ENCODE measurements at regions of chr7 and their contacts with region 1.

Region 1: DNA sequence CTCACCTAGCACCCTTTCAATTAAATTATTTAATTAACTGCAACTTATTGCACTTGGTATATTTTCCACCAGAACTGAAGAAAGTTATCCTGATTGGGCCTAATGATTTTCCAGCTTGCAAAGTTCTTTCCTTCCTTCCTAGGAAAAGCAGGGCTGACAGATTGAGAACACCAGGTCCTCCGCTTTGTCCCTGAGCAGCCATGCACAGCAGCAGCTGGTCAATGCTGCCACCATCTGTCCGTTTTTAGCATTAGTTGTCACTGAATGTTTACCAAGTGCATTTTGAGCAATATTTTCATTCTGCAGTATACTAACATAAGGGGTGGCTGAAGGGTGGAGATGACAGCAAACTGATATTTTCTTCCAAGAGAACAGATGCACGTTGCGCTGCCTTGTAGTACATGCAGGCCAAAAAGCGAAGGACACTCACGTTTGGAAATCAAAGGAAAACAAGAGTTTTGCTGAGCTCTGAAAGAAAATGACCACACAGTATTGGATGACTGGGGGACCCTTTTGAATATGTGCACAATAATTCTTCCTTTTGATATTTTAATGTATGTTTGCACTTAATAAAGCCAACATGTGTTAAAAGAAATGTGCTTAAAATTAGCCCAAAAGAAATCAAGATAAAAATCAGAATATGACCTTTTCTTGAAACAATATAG is 248.8 kb upstream of the PTN start:
- DNase-seq: peak; percentile 84
- ATAC-seq: peak; percentile 88
- H3K4me3 ChIP-seq: no peak overlapping the region
- H3K27ac ChIP-seq: peak overlapping the region; percentile 91
- H3K4me1 ChIP-seq: peaks cover 17% of the 10 kb centered on the region
- H3K27me3 ChIP-seq: no peaks in the 10 kb centered on the region
- CTCF ChIP-seq: peak; percentile 93
- POLR2A ChIP-seq: peak; percentile 66
- RAD21 ChIP-seq: peak; percentile 100

Region 2: DNA sequence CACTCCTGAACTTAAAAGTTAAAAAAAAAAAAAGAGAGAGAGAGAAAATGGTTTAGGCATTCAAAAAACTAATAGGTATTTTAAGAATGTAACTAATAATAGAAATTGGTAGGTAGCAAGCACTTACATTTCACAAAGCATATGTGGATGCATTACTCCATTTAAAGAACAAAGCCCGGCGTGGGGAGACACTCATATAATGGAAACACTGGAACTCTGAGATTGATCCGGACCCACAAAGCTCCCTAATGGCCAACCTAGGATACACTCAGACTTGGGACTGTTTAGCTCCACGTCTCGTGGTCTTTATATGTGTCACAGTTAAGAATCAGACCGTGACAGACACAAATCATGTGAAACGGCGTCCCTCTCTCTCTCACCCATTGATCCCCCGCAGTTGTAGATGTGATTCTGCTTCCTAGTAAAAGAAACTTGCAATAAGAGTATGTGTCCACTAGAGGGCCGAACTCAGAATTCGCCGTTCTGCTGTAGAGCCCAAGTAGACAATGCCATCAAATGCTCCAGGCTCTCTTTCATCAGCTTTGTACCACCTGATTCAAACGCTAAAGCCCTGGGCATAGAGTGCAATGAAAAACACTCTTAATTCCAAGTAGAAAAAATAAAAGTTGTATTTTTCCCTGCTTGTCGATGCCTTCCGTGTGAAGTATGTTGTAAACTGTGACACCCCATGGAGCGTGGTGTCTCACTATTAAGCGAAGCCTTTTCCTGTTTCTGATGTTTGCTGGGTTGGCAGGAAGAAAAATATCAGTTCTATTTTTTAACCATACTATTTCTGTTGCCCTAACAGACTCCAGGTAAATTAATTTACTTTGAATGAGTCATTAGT is 1186.2 kb before region 1 on chr7:
- CTCF ChIA-PET with region 1: interaction called, 3 read pairs
- POLR2A ChIA-PET with region 1: no interaction called
- dilution Hi-C with region 1: no loop called
- in situ Hi-C with region 1: loop called (anchors 25 kb)
- intact Hi-C with region 1: loop called (anchors 1 kb)
- DNase-seq: peak; percentile 53
- ATAC-seq: peak; percentile 94
- H3K4me3 ChIP-seq: no peak overlapping the region
- H3K27ac ChIP-seq: no peak overlapping the region
- H3K4me1 ChIP-seq: no peaks in the 10 kb centered on the region
- H3K27me3 ChIP-seq: no peaks in the 10 kb centered on the region; the same call in 1 of the 2 replicates
- CTCF ChIP-seq: peak; percentile 68
- POLR2A ChIP-seq: no peak
- RAD21 ChIP-seq: peak; percentile 62

Region 3: GRCh38 chr7:136807598-136807997 is 784.8 kb before region 1 on chr7:
- CTCF ChIA-PET with region 1: no interaction called
- POLR2A ChIA-PET with region 1: no interaction called
- dilution Hi-C with region 1: no loop called
- in situ Hi-C with region 1: no loop called
- intact Hi-C with region 1: no loop called
- DNase-seq: no peak
- ATAC-seq: no peak
- H3K4me3 ChIP-seq: no peak overlapping the region
- H3K27ac ChIP-seq: no peak overlapping the region
- H3K4me1 ChIP-seq: no peaks in the 10 kb centered on the region
- H3K27me3 ChIP-seq: 0 out of 2 replicates have a peak, but pooled peaks cover 2% of the 10 kb centered on the region
- CTCF ChIP-seq: no peak
- POLR2A ChIP-seq: no peak
- RAD21 ChIP-seq: no peak

Region 4: GRCh38 chr7:136925044-136925443 is 667.3 kb before region 1 on chr7:
- CTCF ChIA-PET with region 1: no interaction called
- POLR2A ChIA-PET with region 1: no interaction called
- dilution Hi-C with region 1: no loop called
- in situ Hi-C with region 1: no loop called
- intact Hi-C with region 1: loop called (anchors 5 kb)
- DNase-seq: peak; percentile 74
- ATAC-seq: peak; percentile 40
- H3K4me3 ChIP-seq: no peak overlapping the region
- H3K27ac ChIP-seq: no peak overlapping the region
- H3K4me1 ChIP-seq: peaks cover 26% of the 10 kb centered on the region
- H3K27me3 ChIP-seq: no peaks in the 10 kb centered on the region
- CTCF ChIP-seq: no peak
- POLR2A ChIP-seq: no peak
- RAD21 ChIP-seq: no peak

Region 5: GRCh38 chr7:137006293-137006692 is 586.1 kb before region 1 on chr7:
- CTCF ChIA-PET with region 1: no interaction called
- POLR2A ChIA-PET with region 1: no interaction called
- dilution Hi-C with region 1: no loop called
- in situ Hi-C with region 1: no loop called
- intact Hi-C with region 1: loop called (anchors 5 kb)
- DNase-seq: peak; percentile 87
- ATAC-seq: peak; percentile 30
- H3K4me3 ChIP-seq: no peak overlapping the region; the same call in 1 of the 2 replicates
- H3K27ac ChIP-seq: peak overlapping the region; percentile 3; the same call in 1 of the 2 replicates
- H3K4me1 ChIP-seq: peaks cover 23% of the 10 kb centered on the region
- H3K27me3 ChIP-seq: no peaks in the 10 kb centered on the region
- CTCF ChIP-seq: no peak
- POLR2A ChIP-seq: no peak
- RAD21 ChIP-seq: no peak

Region 6: DNA sequence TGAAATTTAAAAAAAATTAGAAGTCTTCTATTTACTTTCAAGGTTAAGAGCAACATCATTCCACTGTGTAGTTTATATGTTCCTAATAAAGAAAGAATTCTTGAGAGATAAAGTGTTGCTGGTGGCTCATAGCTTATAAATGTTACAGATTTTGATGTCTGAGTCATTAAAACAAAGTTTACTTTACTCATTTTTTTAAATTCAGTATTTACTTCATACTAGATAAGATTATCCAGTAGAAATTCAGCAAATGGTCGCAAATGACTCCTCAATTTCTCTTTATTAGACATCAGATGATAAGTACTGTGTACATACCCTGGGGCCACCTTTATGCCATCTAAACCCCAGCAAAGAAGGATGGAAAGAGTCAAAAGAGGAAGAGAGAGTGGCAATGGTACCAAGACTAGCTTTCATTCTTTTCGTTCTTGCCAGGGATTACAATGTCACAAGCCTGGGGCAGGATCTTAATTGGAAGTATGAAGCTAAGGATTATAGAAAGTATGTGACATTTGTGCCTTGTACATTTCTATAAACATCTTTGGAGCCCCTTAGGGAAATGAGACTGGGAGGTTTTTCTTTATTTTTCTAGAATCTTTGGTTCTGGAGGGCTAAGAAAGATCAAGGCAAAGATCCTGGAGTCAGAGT is 517.9 kb before region 1 on chr7:
- CTCF ChIA-PET with region 1: interaction called, 3 read pairs
- POLR2A ChIA-PET with region 1: no interaction called
- dilution Hi-C with region 1: no loop called
- in situ Hi-C with region 1: no loop called
- intact Hi-C with region 1: loop called (anchors 5 kb)
- DNase-seq: peak; percentile 87
- ATAC-seq: peak; percentile 77
- H3K4me3 ChIP-seq: peak overlapping the region; percentile 46; the same call in 1 of the 2 replicates
- H3K27ac ChIP-seq: peak overlapping the region; percentile 100
- H3K4me1 ChIP-seq: peaks cover 18% of the 10 kb centered on the region
- H3K27me3 ChIP-seq: no peaks in the 10 kb centered on the region
- CTCF ChIP-seq: no peak
- POLR2A ChIP-seq: no peak
- RAD21 ChIP-seq: no peak

Region 7: GRCh38 chr7:137304624-137305235 is 287.6 kb before region 1 on chr7:
- CTCF ChIA-PET with region 1: no interaction called
- POLR2A ChIA-PET with region 1: no interaction called
- dilution Hi-C with region 1: no loop called
- in situ Hi-C with region 1: no loop called
- intact Hi-C with region 1: loop called (anchors 5 kb)
- DNase-seq: peak; percentile 72
- ATAC-seq: peak; percentile 40
- H3K4me3 ChIP-seq: peak overlapping the region; percentile 17; the same call in 1 of the 2 replicates
- H3K27ac ChIP-seq: no peak overlapping the region
- H3K4me1 ChIP-seq: peaks cover 2% of the 10 kb centered on the region; the same call in 1 of the 2 replicates
- H3K27me3 ChIP-seq: no peaks in the 10 kb centered on the region
- CTCF ChIP-seq: no peak
- POLR2A ChIP-seq: no peak
- RAD21 ChIP-seq: no peak

Region 8: DNA sequence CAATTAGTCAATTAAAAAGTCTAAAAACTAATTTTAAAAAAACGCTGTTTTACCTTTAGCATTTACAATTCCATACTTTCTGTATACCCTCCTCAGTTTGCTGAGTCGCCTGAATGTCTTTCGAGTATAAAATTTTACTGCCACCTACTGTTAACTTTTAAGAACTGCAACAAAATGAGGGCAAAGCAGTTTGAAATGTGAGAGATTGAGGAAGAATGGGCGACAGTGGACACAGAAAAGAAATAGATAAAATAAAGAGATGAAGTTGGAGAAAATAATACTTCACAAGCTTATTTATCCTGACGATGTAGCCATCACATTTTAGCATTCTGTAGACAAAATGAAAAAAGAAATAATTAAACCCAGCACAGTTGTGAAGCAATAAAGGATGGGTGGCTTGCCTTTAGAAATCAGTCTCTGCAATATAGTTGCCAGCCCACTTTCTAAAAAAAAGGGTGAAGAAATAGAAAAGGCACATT is 138.1 kb before region 1 on chr7:
- CTCF ChIA-PET with region 1: interaction called, 20 read pairs
- POLR2A ChIA-PET with region 1: interaction called, 10 read pairs
- dilution Hi-C with region 1: no loop called
- in situ Hi-C with region 1: no loop called
- intact Hi-C with region 1: loop called (anchors 1 kb)
- DNase-seq: peak; percentile 70
- ATAC-seq: peak; percentile 82
- H3K4me3 ChIP-seq: no peak overlapping the region
- H3K27ac ChIP-seq: peak overlapping the region; percentile 86
- H3K4me1 ChIP-seq: peaks cover 7% of the 10 kb centered on the region
- H3K27me3 ChIP-seq: no peaks in the 10 kb centered on the region
- CTCF ChIP-seq: peak; percentile 72
- POLR2A ChIP-seq: no peak
- RAD21 ChIP-seq: peak; percentile 72

Region 9: GRCh38 chr7:137492889-137493288 is 99.5 kb before region 1 on chr7:
- CTCF ChIA-PET with region 1: no interaction called
- POLR2A ChIA-PET with region 1: no interaction called
- dilution Hi-C with region 1: no loop called
- in situ Hi-C with region 1: no loop called
- intact Hi-C with region 1: no loop called
- DNase-seq: no peak
- ATAC-seq: no peak
- H3K4me3 ChIP-seq: no peak overlapping the region
- H3K27ac ChIP-seq: no peak overlapping the region
- H3K4me1 ChIP-seq: no peaks in the 10 kb centered on the region
- H3K27me3 ChIP-seq: no peaks in the 10 kb centered on the region
- CTCF ChIP-seq: no peak
- POLR2A ChIP-seq: no peak
- RAD21 ChIP-seq: no peak

Region 10: GRCh38 chr7:137642472-137642871 is 50.1 kb after region 1 on chr7:
- CTCF ChIA-PET with region 1: no interaction called
- POLR2A ChIA-PET with region 1: no interaction called
- dilution Hi-C with region 1: no loop called
- in situ Hi-C with region 1: no loop called
- intact Hi-C with region 1: no loop called
- DNase-seq: peak; percentile 69
- ATAC-seq: peak; percentile 87
- H3K4me3 ChIP-seq: no peak overlapping the region
- H3K27ac ChIP-seq: no peak overlapping the region
- H3K4me1 ChIP-seq: peaks cover 7% of the 10 kb centered on the region
- H3K27me3 ChIP-seq: 0 out of 2 replicates have a peak, but pooled peaks cover 2% of the 10 kb centered on the region
- CTCF ChIP-seq: no peak
- POLR2A ChIP-seq: no peak
- RAD21 ChIP-seq: no peak